Panc1 (cell line): ENCODE measurements at regions of chr4 and their contacts with region 1.

Region 1: GRCh38 chr4:6327041-6327917 is 57.6 kb downstream of the WFS1 start:
- DNase-seq: no peak
- ATAC-seq: peak; percentile 87
- H3K4me3 ChIP-seq: no peak overlapping the region
- H3K27ac ChIP-seq: no peak overlapping the region
- H3K4me1 ChIP-seq: no peaks in the 10 kb centered on the region
- H3K27me3 ChIP-seq: no peaks in the 10 kb centered on the region
- CTCF ChIP-seq: no peak

Region 2: DNA sequence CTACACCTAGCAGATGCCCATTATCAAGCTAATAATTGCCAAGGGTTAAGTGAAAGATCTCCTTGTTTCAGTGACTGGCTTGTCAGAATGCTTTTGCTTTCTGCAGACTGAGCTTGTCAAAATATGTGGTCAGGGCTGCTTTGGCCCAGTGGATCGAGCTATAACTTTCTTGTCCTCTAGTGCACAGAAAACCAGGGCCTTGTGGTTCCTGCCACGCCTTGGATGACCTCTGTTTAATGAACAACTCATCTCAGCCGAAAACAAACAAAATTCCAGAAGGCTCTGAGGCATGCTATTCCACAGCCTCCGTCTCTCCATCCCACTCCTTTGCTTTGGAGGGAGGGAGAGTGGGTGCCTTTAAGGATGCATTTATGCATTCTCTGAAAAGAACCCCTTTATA is 605.0 kb before region 1 on chr4:
- CTCF ChIA-PET with region 1: no interaction called
- POLR2A ChIA-PET with region 1: no interaction called
- in situ Hi-C with region 1: no loop called
- intact Hi-C with region 1: no loop called
- DNase-seq: no peak
- ATAC-seq: no peak
- H3K4me3 ChIP-seq: no peak overlapping the region
- H3K27ac ChIP-seq: no peak overlapping the region
- H3K4me1 ChIP-seq: no peaks in the 10 kb centered on the region
- H3K27me3 ChIP-seq: no peaks in the 10 kb centered on the region
- CTCF ChIP-seq: no peak

Region 3: GRCh38 chr4:6076391-6076790 is 250.9 kb before region 1 on chr4:
- CTCF ChIA-PET with region 1: interaction called, 14 read pairs
- POLR2A ChIA-PET with region 1: no interaction called
- in situ Hi-C with region 1: no loop called
- intact Hi-C with region 1: no loop called
- DNase-seq: no peak
- ATAC-seq: no peak
- H3K4me3 ChIP-seq: no peak overlapping the region
- H3K27ac ChIP-seq: no peak overlapping the region
- H3K4me1 ChIP-seq: no peaks in the 10 kb centered on the region
- H3K27me3 ChIP-seq: no peaks in the 10 kb centered on the region; the same call in 1 of the 2 replicates
- CTCF ChIP-seq: 0 out of 2 replicates have a peak, but pooled peaks have one; percentile 35

Region 4: DNA sequence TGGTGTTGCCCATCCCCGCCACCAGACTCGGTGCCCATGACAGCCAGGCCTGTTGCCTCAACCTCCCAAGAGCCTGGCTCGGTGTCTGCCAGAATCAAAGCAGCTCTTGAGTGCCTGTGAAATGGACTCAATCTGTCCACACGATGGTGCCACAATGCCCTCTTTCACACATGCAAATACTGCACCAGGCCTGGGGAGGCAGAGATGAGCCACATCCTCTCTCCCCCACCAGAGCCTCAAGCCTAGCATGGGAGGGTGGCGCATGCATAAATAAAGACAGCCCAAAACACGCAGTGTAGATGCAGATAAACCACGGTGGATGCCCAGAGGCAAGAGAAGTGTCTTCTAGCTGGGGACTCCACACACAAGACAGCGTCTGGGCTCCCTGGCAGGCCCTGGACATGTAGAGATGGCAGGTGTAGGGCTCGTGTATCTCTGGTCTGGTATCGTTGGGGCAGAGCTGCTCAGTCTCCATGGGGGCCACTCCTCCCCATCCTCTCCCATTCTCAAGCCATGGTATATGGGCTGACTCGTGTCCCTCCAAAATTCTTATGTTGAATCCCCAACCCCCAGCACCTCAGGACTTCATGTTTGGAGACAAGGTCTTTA is 192.6 kb before region 1 on chr4:
- CTCF ChIA-PET with region 1: no interaction called
- POLR2A ChIA-PET with region 1: no interaction called
- in situ Hi-C with region 1: no loop called
- intact Hi-C with region 1: loop called (anchors 5 kb)
- DNase-seq: peak; percentile 24
- ATAC-seq: peak; percentile 86
- H3K4me3 ChIP-seq: no peak overlapping the region
- H3K27ac ChIP-seq: no peak overlapping the region
- H3K4me1 ChIP-seq: no peaks in the 10 kb centered on the region
- H3K27me3 ChIP-seq: no peaks in the 10 kb centered on the region; the same call in 1 of the 2 replicates
- CTCF ChIP-seq: no peak; the same call in 1 of the 2 replicates

Region 5: DNA sequence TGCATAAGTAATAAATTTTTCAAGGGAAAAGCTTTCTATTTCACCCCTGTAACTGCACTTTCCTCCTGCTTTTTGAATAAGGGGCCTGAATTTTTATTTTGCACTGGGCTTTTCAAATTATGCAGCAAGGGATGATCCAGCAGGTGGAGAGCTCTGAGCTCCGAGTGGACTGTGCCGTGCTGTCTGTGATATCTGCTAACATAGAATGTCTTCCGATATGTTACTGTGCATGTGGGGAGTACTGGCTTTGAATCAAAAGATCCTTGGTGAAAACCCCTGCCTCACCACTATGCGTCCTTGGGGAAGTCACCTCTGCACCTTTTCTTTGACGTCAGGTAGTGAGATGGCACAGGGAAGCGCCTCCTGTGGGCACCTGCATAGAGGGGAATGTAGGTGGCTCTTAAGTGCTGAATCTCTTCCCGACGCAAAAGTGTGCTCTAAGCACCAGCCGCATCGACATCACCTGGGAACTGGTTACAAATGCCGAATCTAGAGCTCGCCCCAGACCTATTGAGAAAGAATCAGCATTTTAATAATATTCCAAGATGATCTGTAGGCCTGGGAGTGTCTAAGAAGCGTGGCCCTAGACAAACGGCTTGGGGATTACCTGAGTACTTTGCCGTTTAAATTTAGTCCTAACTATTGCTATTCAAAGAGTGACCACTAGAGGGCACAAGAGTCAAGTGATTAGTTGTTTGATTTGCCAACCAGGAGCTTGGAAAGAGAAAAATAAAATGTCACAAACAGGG is 76.9 kb before region 1 on chr4:
- CTCF ChIA-PET with region 1: interaction called, 10 read pairs
- POLR2A ChIA-PET with region 1: no interaction called
- in situ Hi-C with region 1: no loop called
- intact Hi-C with region 1: loop called (anchors 1 kb)
- DNase-seq: peak; percentile 61
- ATAC-seq: peak; percentile 78
- H3K4me3 ChIP-seq: no peak overlapping the region
- H3K27ac ChIP-seq: no peak overlapping the region
- H3K4me1 ChIP-seq: no peaks in the 10 kb centered on the region
- H3K27me3 ChIP-seq: 0 out of 2 replicates have a peak, but pooled peaks cover 4% of the 10 kb centered on the region
- CTCF ChIP-seq: peak; percentile 80

Region 6: DNA sequence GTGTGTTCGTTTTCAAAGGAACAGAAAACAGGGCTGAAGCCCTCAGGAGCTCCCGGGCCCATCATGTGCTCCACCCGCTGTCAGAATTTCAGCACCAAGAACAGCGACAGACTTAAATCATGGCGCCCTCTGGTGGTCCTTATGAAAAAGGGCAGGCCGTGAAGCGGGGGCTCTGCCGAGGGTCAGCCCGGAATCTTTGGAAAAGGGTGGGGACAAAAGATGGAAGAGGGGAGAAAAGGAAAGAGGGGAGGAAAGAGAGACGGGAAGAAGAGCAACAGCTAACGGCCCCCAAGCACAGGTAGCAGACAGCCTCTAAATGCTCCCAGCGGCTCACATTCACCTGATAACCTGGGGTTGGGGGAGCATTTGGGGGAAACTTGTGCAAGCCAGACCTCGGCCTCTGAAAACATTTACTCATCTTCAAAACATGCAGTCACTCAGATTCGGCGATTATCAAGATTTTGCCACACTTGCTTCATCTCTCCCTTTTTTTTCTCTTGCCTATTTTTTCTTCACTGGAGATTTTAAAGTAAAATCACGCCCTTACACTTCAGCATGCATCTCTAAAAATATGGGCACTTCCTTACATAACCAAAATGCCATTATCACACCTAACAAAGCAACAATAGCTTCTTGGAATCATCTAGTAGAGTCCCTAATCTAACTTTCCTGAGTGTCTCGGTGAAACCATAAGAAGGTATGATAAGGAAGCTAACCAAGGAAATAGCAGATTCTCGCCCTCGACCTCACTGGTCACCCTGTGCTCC is 219.6 kb after region 1 on chr4:
- CTCF ChIA-PET with region 1: no interaction called
- POLR2A ChIA-PET with region 1: no interaction called
- in situ Hi-C with region 1: no loop called
- intact Hi-C with region 1: loop called (anchors 2 kb)
- DNase-seq: no peak
- ATAC-seq: 0 out of 2 replicates have a peak, but pooled peaks have one; percentile 71
- H3K4me3 ChIP-seq: no peak overlapping the region
- H3K27ac ChIP-seq: no peak overlapping the region
- H3K4me1 ChIP-seq: no peaks in the 10 kb centered on the region
- H3K27me3 ChIP-seq: no peaks in the 10 kb centered on the region
- CTCF ChIP-seq: peak; percentile 86

Region 7: GRCh38 chr4:6885951-6886557 is 558.8 kb after region 1 on chr4:
- CTCF ChIA-PET with region 1: no interaction called
- POLR2A ChIA-PET with region 1: no interaction called
- in situ Hi-C with region 1: no loop called
- intact Hi-C with region 1: no loop called
- DNase-seq: no peak
- ATAC-seq: peak; percentile 75
- H3K4me3 ChIP-seq: no peak overlapping the region
- H3K27ac ChIP-seq: no peak overlapping the region
- H3K4me1 ChIP-seq: no peaks in the 10 kb centered on the region
- H3K27me3 ChIP-seq: no peaks in the 10 kb centered on the region
- CTCF ChIP-seq: peak; percentile 59